ENCODE measurements at regions of chr17 and their contacts with region 1.

Region 1: DNA sequence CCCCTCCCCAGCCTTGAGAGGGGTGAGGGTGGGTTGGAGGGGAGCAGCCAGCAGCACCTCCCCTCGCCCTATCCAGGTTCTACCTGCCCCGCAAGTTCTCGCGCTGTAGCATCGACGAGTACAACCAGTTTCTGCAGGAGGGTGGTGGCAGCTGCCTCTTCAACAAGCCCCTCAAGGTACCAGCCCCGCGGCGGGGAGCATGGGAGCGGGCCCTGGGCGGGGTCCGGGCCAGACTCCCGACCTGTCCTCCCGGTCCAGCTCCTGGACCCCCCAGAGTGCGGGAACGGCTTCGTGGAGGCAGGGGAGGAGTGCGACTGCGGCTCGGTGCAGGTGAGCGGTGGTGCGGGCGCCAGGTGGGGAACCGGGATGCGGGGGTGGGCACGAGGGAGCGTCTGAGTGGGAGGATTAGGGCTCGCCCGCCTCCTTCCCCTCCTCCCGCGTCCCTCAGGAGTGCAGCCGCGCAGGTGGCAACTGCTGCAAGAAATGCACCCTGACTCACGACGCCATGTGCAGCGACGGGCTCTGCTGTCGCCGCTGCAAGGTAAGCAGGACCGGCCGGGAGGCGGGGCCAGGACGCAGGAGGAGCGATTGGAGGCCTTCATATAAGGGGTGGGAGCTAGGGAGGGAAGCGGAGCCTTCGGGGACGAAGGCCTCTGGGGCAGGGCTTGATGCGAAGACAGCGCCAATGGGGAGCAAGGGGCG is 16.5 kb downstream of the ADAM11 start:
- DNase-seq: peak; percentile 93
- H3K4me3 ChIP-seq: peak overlapping the region; percentile 76
- H3K27ac ChIP-seq: peak overlapping the region; percentile 31
- H3K27me3 ChIP-seq: peaks cover 18% of the 10 kb centered on the region
- CTCF ChIP-seq: no peak

Region 2: DNA sequence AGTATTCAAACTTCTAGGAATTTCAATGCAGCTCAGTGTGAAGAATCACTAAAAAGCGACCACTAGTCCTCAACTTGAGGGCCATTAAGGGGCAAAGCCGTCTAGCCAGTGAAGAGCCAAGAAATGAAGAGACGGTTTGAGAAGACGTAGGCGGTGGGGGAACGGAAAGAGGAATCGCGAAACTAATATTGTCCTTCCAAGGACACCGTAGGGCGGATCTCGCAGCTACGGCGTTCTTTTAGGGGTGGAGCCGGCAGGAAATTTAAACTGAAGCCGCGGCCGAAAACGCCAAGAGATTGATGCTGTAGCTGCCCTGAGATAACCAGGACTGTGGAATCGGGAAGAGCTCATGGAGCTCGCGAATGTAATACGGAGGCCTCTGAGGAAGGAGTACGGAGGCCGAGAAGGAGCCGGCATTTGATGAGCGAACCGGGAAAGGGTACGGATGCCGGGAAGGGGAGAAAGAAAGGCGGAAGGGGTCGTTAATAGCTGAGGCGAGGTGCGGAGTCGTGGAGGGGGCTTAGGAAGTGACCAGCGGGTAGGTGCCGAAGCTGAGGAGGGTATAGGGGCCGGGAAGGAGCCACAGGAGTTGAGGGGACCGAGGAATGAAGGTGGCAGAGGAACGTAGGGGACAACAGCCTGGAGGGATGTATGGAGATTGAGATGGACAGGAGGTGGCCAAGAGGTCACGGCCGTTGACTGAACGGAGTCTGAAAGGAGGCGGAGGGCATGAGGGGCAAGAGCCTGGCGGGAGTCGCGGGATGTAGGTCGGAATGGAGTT is 66.7 kb before region 1 on chr17 and contains the start of gene DBF4B:
- CTCF ChIA-PET with region 1: no interaction called
- POLR2A ChIA-PET with region 1: no interaction called
- DNase-seq: peak; percentile 85
- H3K4me3 ChIP-seq: peak within 1 kb of the TSS; percentile 99
- H3K27ac ChIP-seq: peak within 1 kb of the TSS; percentile 77
- H3K27me3 ChIP-seq: no peaks in the 10 kb centered on the region
- CTCF ChIP-seq: no peak
- polyA plus RNA-seq, gene DBF4B: 2.6 and 3.0 TPM in 2 replicates

Region 3: DNA sequence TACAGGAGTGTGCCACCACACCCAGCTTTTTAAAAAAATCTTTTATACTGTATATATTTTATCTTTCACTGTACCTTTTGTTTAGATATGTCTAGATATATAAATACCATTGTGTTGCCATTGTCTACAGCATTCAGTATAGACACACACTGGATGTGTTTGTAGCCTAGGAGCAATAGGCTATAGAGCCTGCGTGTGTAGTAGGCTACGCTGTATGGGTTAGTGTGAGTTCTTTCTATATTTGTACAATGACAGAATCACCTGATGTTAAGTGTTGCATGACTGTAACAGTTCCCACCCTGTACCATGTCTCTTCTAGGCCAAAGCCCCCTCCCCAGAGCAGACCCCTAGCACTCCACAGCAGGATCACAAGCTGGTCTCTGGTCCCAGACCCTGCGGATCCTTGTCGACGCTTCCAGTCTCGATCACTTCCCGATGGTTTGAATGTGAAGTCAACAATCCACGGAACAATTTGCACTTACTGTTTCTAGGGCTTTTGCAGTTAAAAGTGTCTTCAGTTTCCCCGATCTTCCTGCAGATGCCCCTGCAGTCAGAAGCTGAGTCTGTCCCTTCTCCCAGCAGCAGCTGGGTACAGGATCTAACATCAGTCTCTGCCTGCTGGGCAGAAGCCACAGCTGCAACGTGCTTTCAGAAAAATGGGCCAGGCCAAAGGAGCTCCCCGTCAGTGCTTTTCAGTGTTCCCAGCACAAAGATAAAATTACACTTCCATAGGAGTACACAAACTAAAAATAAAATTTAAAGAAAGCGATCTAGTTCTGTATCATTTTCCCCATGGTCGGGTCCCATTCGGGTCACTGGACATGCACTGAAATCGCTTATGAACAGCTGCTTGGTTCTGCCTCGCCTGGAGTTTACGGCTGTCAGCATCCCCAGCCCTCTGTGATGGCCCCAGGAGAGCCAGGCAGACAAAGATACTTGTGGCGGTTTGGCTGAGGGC is 18.9 kb after region 1 on chr17:
- CTCF ChIA-PET with region 1: interaction called, 11 read pairs
- POLR2A ChIA-PET with region 1: interaction called, 4 read pairs
- DNase-seq: no peak
- H3K4me3 ChIP-seq: no peak overlapping the region
- H3K27ac ChIP-seq: peak overlapping the region; percentile 96
- H3K27me3 ChIP-seq: no peaks in the 10 kb centered on the region
- CTCF ChIP-seq: no peak

Region 4: GRCh38 chr17:44844390-44844830 is 69.1 kb after region 1 on chr17:
- CTCF ChIA-PET with region 1: interaction called, 28 read pairs
- POLR2A ChIA-PET with region 1: no interaction called
- DNase-seq: no peak
- H3K4me3 ChIP-seq: no peak overlapping the region
- H3K27ac ChIP-seq: peak overlapping the region; percentile 68
- H3K27me3 ChIP-seq: no peaks in the 10 kb centered on the region
- CTCF ChIP-seq: peak; percentile 36

Region 5: GRCh38 chr17:44878627-44879221 is 103.4 kb after region 1 on chr17:
- CTCF ChIA-PET with region 1: interaction called, 53 read pairs
- POLR2A ChIA-PET with region 1: no interaction called
- DNase-seq: no peak
- H3K4me3 ChIP-seq: no peak overlapping the region
- H3K27ac ChIP-seq: no peak overlapping the region
- H3K27me3 ChIP-seq: no peaks in the 10 kb centered on the region
- CTCF ChIP-seq: peak; percentile 70

Measured in AG04450 (cell line).